Ovary (tissue), 10 donors: ENCODE measurements at regions of chr9 and their contacts with region 1.

Region 1: GRCh38 chr9:133485361-133486260 is 6.7 kb upstream of the SLC2A6 start:
- DNase-seq: peak in 1 of 5 donors; percentile 32
- H3K4me3 ChIP-seq: no peak overlapping the region
- H3K27ac ChIP-seq: no peak overlapping the region
- H3K4me1 ChIP-seq: no peaks in the 10 kb centered on the region
- H3K27me3 ChIP-seq: no peaks in the 10 kb centered on the region
- CTCF ChIP-seq: no peak
- EP300 ChIP-seq: no peak
- POLR2A ChIP-seq: no peak

Region 2: GRCh38 chr9:133406480-133407307 is 78.9 kb before region 1 on chr9:
- intact Hi-C with region 1: loop called (anchors 5 kb)
- DNase-seq: peak; percentile 53 to 79 (median 72)
- H3K4me3 ChIP-seq: no peak overlapping the region
- H3K27ac ChIP-seq: no peak overlapping the region
- H3K4me1 ChIP-seq: no peaks in the 10 kb centered on the region
- H3K27me3 ChIP-seq: no peaks in the 10 kb centered on the region
- CTCF ChIP-seq: peak; percentile 61 to 78 (median 73)
- EP300 ChIP-seq: no peak
- POLR2A ChIP-seq: no peak